Testis (tissue), 5 donors: ENCODE measurements at regions of chr6 and their contacts with region 1.

Region 1: GRCh38 chr6:139364302-139364981 is 10.0 kb downstream of the CITED2 start:
- DNase-seq: no peak
- H3K4me3 ChIP-seq: no peak overlapping the region
- H3K27ac ChIP-seq: no peak overlapping the region
- H3K4me1 ChIP-seq: peaks cover 10% of the 10 kb centered on the region
- H3K27me3 ChIP-seq: no peaks in the 10 kb centered on the region
- CTCF ChIP-seq: peak; percentile 78 to 84 (median 81)
- POLR2A ChIP-seq: no peak

Region 2: DNA sequence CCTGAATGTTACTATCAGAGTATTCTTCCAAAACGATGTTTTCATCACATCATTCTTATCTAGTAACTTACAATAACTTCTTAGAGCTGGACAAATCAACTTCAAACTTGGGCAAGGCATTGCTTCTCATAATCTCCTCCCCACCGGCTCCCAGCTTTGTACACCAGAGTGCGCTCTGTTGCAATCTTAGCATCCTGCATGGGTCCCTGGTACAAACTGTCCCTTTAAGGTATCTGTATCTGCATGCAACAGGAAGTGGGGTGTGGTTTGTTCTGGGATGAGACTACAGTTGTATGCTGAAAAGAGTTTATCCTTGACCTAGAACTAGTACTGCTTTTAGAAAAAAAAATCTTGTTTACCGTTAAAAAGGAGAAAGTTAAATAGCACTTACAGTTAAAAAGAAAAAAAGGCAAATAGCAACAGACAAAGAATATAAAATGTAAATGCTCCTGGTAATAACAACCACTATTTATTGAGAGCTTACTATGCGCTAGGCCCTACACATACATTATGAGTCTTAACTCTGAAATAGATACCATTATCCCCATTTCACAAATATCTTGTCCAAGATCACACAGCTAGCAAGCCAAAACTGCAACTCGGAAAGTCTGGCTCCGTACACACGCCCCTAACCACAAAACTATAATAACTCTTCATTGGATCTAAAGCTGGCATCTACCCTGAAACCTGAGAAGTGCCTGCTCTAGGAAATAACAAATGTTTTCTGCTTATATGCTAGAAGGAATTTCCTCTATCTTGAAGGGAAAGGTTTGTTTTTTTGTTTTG is 239.4 kb before region 1 on chr6:
- intact Hi-C with region 1: loop called (anchors 10 kb)
- DNase-seq: peak; percentile 87
- H3K4me3 ChIP-seq: no peak overlapping the region
- H3K27ac ChIP-seq: peak overlapping the region; percentile 2 to 87
- H3K4me1 ChIP-seq: peaks cover 17% of the 10 kb centered on the region
- H3K27me3 ChIP-seq: no peaks in the 10 kb centered on the region
- CTCF ChIP-seq: peak in 2 of 3 experiments; percentile 61 to 62
- POLR2A ChIP-seq: no peak

Region 3: GRCh38 chr6:139219271-139219729 is 145.1 kb before region 1 on chr6:
- intact Hi-C with region 1: loop called (anchors 5 kb)
- DNase-seq: peak; percentile 94
- H3K4me3 ChIP-seq: no peak overlapping the region
- H3K27ac ChIP-seq: peak overlapping the region; percentile 21 to 34
- H3K4me1 ChIP-seq: no peaks in the 10 kb centered on the region
- H3K27me3 ChIP-seq: no peaks in the 10 kb centered on the region
- CTCF ChIP-seq: peak; percentile 55 to 72 (median 64)
- POLR2A ChIP-seq: no peak

Region 4: GRCh38 chr6:139474145-139475108 is 110.0 kb after region 1 on chr6:
- intact Hi-C with region 1: no loop called
- DNase-seq: peak; percentile 38
- H3K4me3 ChIP-seq: no peak overlapping the region
- H3K27ac ChIP-seq: peak overlapping the region; percentile 6 to 70
- H3K4me1 ChIP-seq: peaks cover 21% of the 10 kb centered on the region
- H3K27me3 ChIP-seq: no peaks in the 10 kb centered on the region
- CTCF ChIP-seq: no peak
- POLR2A ChIP-seq: no peak

Region 5: DNA sequence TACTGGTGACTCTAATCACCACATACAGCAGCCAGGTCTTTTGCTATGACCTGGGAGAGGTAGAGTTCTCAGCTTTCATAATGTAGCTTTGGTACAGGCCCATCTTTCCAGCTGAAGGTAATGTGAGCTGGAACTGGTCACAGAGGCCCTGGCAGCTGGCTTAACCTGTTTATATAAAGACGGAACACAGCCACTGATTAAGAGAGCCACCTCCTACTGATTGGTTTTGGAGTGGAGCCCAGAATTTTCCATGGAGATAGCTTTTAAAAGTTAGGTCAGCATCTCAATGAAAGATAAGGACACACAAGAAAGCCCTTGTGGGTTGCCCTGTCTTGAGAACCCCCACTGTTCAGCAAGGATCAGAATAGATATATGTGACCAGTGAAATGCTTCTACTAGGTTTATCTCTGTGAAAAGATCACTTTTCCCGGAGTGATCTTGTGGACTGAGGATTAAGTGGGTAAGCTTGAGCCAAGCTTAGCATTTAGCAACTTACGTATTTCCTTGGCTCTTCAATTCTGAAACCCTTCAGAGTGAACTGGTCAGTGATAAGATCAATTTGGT is 223.7 kb after region 1 on chr6:
- intact Hi-C with region 1: no loop called
- DNase-seq: peak; percentile 82
- H3K4me3 ChIP-seq: no peak overlapping the region
- H3K27ac ChIP-seq: peak overlapping the region; percentile 53 to 71
- H3K4me1 ChIP-seq: peaks cover 32% of the 10 kb centered on the region
- H3K27me3 ChIP-seq: no peaks in the 10 kb centered on the region
- CTCF ChIP-seq: no peak
- POLR2A ChIP-seq: no peak